Caco-2 (cell line): ENCODE measurements at regions of chr15 and their contacts with region 1.

Region 1: GRCh38 chr15:75042730-75043508 is 19.5 kb downstream of the PPCDC start:
- DNase-seq: peak; percentile 79
- H3K4me3 ChIP-seq: no peak overlapping the region
- H3K4me3 Mint-ChIP-seq: no peak overlapping the region
- H3K27ac Mint-ChIP-seq: peak overlapping the region; percentile 82
- H3K4me1 ChIP-seq: peaks cover 36% of the 10 kb centered on the region
- H3K4me1 Mint-ChIP-seq: peaks cover 41% of the 10 kb centered on the region
- H3K27me3 ChIP-seq: no peaks in the 10 kb centered on the region
- H3K27me3 Mint-ChIP-seq: no peaks in the 10 kb centered on the region
- CTCF ChIP-seq: peak; percentile 55 to 63

Region 2: DNA sequence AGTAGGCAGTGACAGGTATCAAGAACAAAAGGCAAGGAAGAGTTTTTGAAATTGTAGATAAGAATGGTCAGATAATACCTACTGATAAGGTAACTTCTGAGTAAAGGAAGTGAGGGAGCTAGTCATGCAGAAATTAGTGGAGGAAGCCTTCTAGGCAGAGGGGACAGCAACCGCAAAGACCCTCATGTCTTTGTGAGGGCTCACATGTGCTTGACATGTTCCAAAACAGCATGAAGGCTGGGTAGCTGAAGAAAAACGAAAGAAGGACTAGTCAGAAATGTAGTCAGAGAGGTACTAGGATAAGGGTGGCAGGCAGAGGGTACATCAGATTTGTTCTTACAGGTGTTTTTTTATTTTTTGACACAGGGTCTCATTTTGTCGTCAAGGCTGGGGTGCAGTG is 403.2 kb after region 1 on chr15:
- CTCF ChIA-PET with region 1: no interaction called
- POLR2A ChIA-PET with region 1: interaction called, 10 read pairs
- intact Hi-C with region 1: no loop called
- DNase-seq: no peak
- H3K4me3 ChIP-seq: no peak overlapping the region
- H3K4me3 Mint-ChIP-seq: no peak overlapping the region
- H3K27ac Mint-ChIP-seq: no peak overlapping the region
- H3K4me1 ChIP-seq: peaks cover 14% of the 10 kb centered on the region
- H3K4me1 Mint-ChIP-seq: peaks cover 10% of the 10 kb centered on the region
- H3K27me3 ChIP-seq: no peaks in the 10 kb centered on the region
- H3K27me3 Mint-ChIP-seq: no peaks in the 10 kb centered on the region
- CTCF ChIP-seq: no peak